ENCODE measurements at regions of chr17 and their contacts with region 1.

Region 1: DNA sequence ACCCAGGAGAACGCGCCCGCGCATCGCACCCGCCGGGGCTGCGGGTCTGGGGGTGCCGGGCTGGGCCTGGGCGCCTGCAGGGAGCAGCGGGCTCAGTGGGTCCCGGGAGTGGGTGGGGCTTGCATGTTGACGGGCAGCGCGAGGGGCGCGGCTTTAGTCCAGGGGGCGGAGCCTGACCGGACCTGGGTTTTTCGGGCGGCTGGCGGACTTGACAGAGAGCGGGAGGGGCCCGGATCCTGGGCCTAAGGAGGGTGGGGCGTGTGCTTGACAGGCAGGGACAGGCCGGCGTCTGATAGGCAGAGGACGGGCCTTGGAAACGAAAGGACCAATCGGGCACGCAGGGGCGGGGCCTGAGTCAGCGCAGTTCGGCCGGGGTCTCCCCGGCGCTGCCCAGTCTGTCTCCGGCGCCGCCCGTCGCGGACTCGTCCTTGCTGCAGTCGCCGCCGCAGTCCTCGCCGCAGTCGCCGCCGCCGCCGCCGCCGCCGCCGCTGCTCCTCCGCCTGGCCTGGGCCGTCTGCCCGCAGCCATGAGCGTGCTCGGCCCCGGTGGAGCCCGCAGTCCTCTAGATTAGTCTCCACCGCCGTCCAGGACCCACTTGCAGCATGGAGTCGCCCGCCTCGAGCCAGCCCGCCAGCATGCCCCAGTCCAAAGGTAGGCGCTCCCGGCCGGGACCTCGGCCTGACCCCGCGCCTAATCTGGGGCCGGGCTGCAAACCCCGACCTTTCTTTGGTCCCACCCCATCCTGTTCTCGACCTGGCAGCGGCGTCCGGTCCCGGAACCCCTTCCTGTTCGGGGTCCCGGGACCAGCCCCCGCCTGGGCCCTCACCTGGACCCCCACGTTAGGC is at the start of gene MAP2K3:
- DNase-seq: peak; percentile 99 to 100 (median 100)

Region 2: GRCh38 chr17:21126645-21127510 is 157.7 kb before region 1 on chr17 and contains the start of gene DHRS7B:
- intact Hi-C with region 1: loop called (anchors 10 kb)
- DNase-seq: peak; percentile 93 to 99 (median 96)